Posterior cingulate gyrus (tissue), 11 donors: ENCODE measurements at regions of chr1 and their contacts with region 1.

Region 1: GRCh38 chr1:100037927-100038659 is 68.3 kb downstream of the SLC35A3 start:
- DNase-seq: peak; percentile 80 to 99 (median 90)

Region 2: DNA sequence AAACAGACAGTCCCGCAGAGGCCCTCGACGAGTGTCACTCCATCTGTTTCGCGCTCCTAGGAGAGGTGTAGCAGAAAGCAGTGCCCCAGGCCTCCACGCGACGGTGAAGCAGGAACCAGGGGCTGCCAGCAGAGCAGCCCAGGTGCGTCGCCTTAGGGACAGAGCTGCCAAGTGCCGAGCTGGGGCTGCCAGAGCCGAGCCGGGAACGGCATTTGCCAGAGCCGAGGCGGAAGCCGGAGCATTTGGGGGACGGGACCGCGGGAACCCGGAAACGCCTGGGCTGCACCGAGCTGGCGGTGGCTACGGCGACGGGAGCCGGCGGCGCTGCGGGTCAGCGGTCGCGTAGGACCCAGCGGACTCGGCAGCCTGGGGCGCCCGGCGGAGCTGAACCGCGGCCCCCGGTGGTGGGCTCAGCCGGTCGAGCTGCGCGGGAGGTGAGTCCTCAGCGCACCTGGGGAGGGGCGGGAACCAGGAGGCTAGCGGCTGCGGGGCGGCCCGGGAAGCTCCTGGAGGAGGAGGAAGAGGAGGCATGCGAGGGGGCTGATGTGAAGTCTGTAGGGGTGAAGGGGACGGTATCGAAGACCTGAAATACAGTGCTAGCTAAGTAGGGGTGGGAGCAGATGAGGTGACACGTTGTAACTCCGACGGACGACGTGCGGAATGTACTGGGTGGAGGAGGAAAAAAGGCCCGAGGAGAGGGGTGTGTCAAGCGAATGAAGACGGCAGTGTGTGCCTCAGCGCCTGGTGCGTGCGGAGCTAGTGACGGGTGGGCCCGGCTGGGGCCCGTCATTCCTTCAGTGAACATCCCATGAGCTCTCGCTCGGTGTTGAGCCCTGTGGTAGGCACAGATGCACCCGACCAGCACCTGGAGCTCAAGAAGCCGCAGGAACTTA is 68.1 kb before region 1 on chr1 and contains the start of gene SLC35A3:
- intact Hi-C with region 1: loop called (anchors 10 kb)
- DNase-seq: peak; percentile 74 to 97 (median 84)

Region 3: GRCh38 chr1:100087396-100087795 is 49.3 kb after region 1 on chr1:
- intact Hi-C with region 1: no loop called
- DNase-seq: no peak

Region 4: DNA sequence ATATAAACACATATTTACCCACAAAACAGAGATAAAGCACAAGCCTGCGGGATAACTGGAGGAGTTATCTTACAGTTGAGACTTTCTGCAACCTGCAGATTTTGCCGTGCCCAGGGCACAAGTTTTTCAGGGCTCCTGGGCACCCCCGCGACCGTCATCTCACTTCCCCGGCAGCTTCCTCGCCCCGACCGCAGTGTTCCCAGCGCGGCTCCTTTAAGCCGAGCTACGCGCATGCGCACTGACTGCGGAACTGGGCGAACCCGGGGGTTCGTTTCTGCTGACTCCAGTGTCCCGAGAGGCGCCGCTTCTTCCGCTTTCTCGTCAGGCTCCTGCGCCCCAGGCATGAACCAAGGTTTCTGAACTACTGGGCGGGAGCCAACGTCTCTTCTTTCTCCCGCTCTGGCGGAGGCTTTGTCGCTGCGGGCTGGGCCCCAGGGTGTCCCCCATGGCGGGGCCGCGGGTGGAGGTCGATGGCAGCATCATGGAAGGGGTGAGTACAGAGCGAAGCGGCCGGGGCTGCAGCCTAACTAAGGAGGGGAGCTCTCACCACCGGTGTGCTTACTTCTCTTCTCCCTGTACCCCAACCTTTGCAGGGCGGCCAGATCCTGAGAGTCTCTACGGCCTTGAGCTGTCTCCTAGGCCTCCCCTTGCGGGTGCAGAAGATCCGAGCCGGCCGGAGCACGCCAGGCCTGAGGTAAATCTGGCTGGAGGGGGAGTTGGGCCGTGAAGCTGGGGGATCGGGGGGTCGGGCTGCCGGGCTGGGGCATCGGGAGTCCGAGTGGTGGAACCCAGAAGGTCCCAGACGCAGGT is 228.0 kb after region 1 on chr1 and contains the start of gene RTCA:
- intact Hi-C with region 1: loop called (anchors 10 kb)
- DNase-seq: peak; percentile 93 to 99 (median 96)